ENCODE measurements at regions of chr12 and their contacts with region 1.

Region 1: GRCh38 chr12:54984658-54985376 is at the start of gene TESPA1:
- DNase-seq: peak; percentile 82
- H3K4me3 Mint-ChIP-seq: peak within 1 kb of the TSS; percentile 92
- H3K27ac Mint-ChIP-seq: peak within 1 kb of the TSS; percentile 89
- H3K4me1 Mint-ChIP-seq: peaks cover 59% of the 10 kb centered on the region
- H3K27me3 Mint-ChIP-seq: no peaks in the 10 kb centered on the region
- total RNA-seq, gene TESPA1: 179 and 186 TPM in 2 replicates

Region 2: DNA sequence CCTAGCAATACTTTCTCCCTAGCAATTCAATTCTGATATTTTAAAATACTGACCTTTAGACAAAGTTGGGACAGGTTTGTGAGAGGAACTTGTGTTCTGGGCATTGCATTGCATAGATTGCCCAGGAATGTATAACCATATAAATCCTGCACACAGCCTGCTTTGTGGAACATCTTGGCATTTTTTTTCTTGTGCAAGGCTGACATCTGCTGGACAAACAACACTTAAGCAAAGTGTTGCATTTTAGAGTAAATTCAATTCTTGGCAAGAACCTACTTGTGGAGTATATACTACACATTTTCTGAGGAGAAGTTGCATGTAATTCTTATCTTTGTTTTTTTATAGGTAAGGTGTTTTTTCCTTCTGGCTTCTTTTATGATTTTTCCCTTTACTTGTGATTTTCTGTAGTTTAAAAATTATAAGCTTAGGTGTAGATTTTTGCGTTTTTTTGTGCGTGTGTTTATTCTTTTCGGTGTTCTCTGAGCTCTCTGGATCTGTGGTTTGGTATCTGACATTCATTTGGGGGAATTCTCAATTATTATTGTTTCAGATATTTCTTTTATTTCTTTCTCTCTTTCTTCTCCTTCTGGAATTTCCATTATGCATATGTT is 26.7 kb before region 1 on chr12:
- intact Hi-C with region 1: loop called (anchors 2 kb)
- DNase-seq: no peak
- H3K4me3 Mint-ChIP-seq: peak overlapping the region; percentile 46
- H3K27ac Mint-ChIP-seq: peak overlapping the region; percentile 86
- H3K4me1 Mint-ChIP-seq: peaks cover 80% of the 10 kb centered on the region
- H3K27me3 Mint-ChIP-seq: no peaks in the 10 kb centered on the region

Region 3: DNA sequence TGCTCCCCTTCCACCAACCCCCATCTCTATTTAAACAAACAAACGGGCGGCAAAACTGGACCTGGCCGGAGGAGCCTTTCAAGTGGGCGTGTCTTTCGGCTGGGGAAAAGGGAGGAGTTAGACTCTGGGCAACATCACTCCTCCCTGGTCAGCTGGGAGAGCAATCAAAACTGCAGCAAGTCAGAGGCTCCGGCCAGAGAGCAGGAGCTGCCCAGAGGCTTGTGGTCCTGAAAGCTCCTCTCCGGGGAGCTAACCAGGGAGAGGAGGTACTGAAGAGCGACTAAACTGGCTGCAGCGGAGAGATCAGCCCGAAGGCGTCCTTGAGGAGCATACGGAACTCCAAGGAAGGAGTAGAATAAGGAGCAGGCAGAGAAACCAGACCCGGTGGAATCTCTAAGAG is 35.0 kb after region 1 on chr12 and contains the start of gene NEUROD4:
- intact Hi-C with region 1: no loop called
- DNase-seq: no peak
- H3K4me3 Mint-ChIP-seq: no peak within 1 kb of the TSS
- H3K27ac Mint-ChIP-seq: no peak within 1 kb of the TSS
- H3K4me1 Mint-ChIP-seq: peaks cover 5% of the 10 kb centered on the region
- H3K27me3 Mint-ChIP-seq: peaks cover 66% of the 10 kb centered on the region
- total RNA-seq, gene NEUROD4: not detected in 2 replicates